ENCODE measurements at regions of chr10 and their contacts with region 1.

Region 1: DNA sequence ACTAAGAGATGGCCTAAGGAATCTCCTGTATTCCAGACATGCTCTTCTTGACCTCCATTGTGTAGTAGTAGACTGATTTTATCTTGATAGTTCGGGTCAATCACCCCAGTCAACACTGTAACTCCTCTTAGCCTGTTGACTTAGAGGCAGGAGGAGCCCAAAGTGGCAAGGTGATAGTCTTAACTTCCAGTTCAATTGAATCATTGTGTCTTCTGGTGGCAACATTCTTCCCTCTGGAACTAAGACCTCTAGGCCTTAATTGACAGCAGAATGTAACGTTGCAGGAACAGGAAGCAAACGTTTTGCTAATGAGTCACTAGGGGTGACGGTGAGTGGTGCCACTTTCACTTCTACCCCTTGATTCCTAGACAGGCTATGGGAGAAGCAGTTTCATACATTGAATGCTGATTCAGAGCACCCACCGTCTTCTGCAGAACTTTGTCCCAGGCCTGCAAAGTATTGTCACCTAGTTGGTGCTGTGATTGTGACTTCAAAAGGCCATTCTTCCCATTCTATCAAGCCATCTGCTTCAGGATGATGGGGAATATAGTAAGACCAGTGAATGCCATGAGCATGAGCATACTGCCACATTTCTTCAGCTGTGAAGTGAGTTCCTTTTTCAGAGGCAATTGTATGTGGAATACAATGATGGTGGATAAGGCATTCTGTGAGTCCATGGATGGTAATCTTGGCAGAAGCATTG is 23.9 kb upstream of the PAPSS2 start:
- DNase-seq: peak; percentile 62 to 97
- H3K4me3 ChIP-seq: no peak overlapping the region
- H3K27ac ChIP-seq: peak overlapping the region; percentile 74
- H3K4me1 ChIP-seq: peaks cover 31% of the 10 kb centered on the region
- H3K27me3 ChIP-seq: no peaks in the 10 kb centered on the region
- CTCF ChIP-seq: no peak

Region 2: GRCh38 chr10:87531908-87532622 is 103.7 kb before region 1 on chr10:
- CTCF ChIA-PET with region 1: no interaction called
- POLR2A ChIA-PET with region 1: interaction called, 3 read pairs
- intact Hi-C with region 1: loop called (anchors 1 kb)
- DNase-seq: no peak
- H3K4me3 ChIP-seq: no peak overlapping the region
- H3K27ac ChIP-seq: no peak overlapping the region
- H3K4me1 ChIP-seq: no peaks in the 10 kb centered on the region
- H3K27me3 ChIP-seq: no peaks in the 10 kb centered on the region
- CTCF ChIP-seq: no peak

Region 3: DNA sequence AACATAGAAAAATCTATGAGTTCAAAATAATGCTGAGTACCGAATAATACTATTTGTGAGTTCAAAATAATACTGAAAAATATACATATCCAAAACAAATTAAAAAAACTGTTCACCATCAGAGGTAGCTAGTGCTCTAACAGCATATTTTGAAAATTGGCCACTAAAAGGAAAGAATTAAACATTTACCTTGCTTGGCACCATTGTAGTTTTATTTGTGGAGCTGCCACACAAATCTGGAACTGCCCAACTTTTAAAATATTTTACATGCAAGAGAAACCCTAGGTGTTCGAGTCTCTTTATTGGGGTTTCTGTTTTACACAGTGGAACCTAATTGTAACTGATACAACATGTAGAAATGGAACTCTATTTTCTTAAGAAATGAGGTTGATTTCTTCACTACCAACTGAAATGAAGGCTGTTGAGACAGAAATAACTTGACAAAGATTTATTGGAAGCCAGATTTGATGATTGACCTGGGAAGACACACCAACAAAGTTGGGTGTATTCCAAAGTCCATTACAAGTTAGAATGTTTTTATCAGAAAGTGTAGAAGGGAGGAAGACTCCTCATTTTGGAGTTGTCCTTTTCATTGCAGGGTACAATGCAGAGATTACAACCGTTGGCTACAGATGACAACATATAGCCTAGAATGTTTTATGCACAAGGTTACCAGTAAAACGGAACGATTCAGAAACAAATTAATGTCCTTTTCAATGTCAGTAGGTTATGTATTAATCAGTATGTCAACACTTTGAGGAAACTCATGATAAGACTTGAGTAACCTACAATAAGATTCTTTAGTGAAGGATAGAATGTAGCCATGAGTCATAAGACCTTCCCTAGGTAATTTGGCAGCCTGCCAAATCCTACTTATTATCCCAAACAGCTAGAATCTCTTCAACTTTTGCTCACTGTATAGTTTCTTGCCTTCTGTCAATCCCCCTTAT is 49.9 kb before region 1 on chr10:
- CTCF ChIA-PET with region 1: no interaction called
- POLR2A ChIA-PET with region 1: no interaction called
- intact Hi-C with region 1: loop called (anchors 1 kb)
- DNase-seq: peak; percentile 25 to 90
- H3K4me3 ChIP-seq: no peak overlapping the region
- H3K27ac ChIP-seq: peak overlapping the region; percentile 26
- H3K4me1 ChIP-seq: peaks cover 18% of the 10 kb centered on the region
- H3K27me3 ChIP-seq: no peaks in the 10 kb centered on the region
- CTCF ChIP-seq: no peak

Region 4: DNA sequence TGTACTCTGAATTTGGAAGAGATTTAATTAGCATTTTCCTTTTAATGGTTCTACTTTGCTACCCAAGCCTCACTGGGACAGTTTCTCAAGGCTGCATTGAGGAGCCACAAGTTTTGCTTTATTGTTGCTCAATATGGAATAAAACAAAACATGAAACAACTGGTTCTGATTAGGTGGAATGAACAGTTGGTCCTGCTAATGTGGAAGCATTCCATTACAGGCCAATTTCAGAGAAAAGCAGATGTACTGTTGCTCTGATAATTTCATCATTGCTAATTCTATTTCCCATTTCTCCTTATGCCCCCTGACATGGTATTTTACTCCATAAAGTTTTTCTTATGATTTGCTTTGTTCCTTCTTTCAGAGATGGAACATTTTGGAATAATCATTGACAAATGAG is 42.1 kb before region 1 on chr10:
- CTCF ChIA-PET with region 1: no interaction called
- POLR2A ChIA-PET with region 1: no interaction called
- intact Hi-C with region 1: loop called (anchors 2 kb)
- DNase-seq: no peak
- H3K4me3 ChIP-seq: no peak overlapping the region
- H3K27ac ChIP-seq: peak overlapping the region; percentile 67
- H3K4me1 ChIP-seq: peaks cover 27% of the 10 kb centered on the region
- H3K27me3 ChIP-seq: no peaks in the 10 kb centered on the region
- CTCF ChIP-seq: no peak

Region 5: GRCh38 chr10:87605628-87606308 is 30.0 kb before region 1 on chr10:
- CTCF ChIA-PET with region 1: no interaction called
- POLR2A ChIA-PET with region 1: no interaction called
- intact Hi-C with region 1: no loop called
- DNase-seq: no peak
- H3K4me3 ChIP-seq: no peak overlapping the region
- H3K27ac ChIP-seq: no peak overlapping the region
- H3K4me1 ChIP-seq: no peaks in the 10 kb centered on the region
- H3K27me3 ChIP-seq: no peaks in the 10 kb centered on the region
- CTCF ChIP-seq: no peak

Region 6: DNA sequence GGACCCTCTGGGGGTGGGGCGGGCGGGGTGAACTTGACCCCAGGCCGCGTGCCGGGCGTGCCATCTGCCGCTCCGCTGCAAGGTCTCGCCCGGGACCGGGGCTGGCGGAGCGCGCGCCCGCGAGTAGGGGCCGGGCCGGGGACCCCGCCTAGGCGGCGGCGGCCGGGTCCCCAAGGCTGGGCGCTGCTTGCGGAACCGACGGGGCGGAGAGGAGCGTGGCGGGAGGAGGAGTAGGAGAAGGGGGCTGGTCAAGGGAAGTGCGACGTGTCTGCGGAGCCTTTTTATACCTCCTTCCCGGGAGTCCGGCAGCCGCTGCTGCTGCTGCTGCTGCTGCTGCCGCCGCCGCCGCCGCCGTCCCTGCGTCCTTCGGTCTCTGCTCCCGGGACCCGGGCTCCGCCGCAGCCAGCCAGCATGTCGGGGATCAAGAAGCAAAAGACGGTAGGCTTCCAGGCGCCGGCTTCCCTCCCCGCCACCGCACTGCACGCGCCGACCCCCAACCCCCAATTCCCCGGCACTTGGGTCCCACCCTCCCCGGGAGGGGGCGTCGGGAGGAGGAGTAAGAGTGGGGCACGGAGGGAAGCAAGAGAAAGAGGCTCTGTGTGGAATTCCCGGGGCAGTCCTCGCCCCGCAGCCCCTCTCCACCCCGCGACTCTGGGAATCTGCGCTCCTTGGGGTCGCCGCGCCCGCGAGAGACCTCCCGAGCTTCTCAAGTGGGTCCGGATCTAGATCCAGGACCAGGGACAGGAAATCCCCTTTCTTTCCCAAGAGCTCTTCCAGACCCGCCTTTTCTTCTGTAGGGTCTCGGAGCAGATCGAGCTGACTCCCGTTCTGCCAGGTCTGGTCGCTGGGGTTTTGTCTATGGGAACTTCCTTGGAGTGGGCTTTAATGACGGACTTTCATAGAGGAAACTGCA is 24.1 kb after region 1 on chr10 and contains the start of gene PAPSS2:
- CTCF ChIA-PET with region 1: no interaction called
- POLR2A ChIA-PET with region 1: no interaction called
- intact Hi-C with region 1: loop called (anchors 1 kb)
- DNase-seq: peak in 1 of 2 experiments; percentile 36
- H3K4me3 ChIP-seq: peak within 1 kb of the TSS; percentile 75
- H3K27ac ChIP-seq: no peak within 1 kb of the TSS
- H3K4me1 ChIP-seq: peaks cover 9% of the 10 kb centered on the region; the same call in 1 of the 2 replicates
- H3K27me3 ChIP-seq: no peaks in the 10 kb centered on the region
- CTCF ChIP-seq: no peak
- total RNA-seq, gene PAPSS2: 37.4 and 71.8 TPM in 2 replicates

Region 7: GRCh38 chr10:87685832-87686574 is 50.2 kb after region 1 on chr10:
- CTCF ChIA-PET with region 1: no interaction called
- POLR2A ChIA-PET with region 1: no interaction called
- intact Hi-C with region 1: no loop called
- DNase-seq: no peak
- H3K4me3 ChIP-seq: no peak overlapping the region
- H3K27ac ChIP-seq: no peak overlapping the region
- H3K4me1 ChIP-seq: 0 out of 2 replicates have a peak, but pooled peaks cover under 1% of the 10 kb centered on the region
- H3K27me3 ChIP-seq: no peaks in the 10 kb centered on the region
- CTCF ChIP-seq: no peak

Measured in PC-9 (cell line).